ENCODE measurements at regions of chr1 and their contacts with region 1.

Region 1: GRCh38 chr1:99818063-99818699 is 32.0 kb upstream of the AGL start:
- DNase-seq: no peak
- H3K4me3 ChIP-seq: no peak overlapping the region
- H3K27ac ChIP-seq: no peak overlapping the region
- H3K4me1 ChIP-seq: no peaks in the 10 kb centered on the region
- H3K27me3 ChIP-seq: no peaks in the 10 kb centered on the region
- CTCF ChIP-seq: no peak
- POLR2A ChIP-seq: no peak

Region 2: DNA sequence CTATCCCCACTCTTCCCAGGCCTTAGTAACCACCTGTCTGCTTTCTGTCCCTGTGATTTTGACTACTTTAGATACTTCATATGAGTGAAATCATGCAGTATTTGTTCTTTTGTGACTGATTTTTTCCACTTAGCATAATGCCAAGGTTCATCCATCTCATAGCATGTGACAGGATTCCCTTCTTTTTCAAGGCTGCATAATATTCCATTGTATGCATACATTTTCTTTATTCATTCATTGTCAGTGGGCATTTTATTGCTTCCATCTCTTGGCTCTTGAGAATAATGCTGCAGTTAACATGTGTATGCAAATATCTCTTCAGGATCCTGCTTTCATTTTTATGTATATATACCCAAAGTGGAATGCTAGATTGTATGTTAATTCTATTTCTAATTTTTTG is 88.4 kb after region 1 on chr1:
- intact Hi-C with region 1: no loop called
- DNase-seq: no peak
- H3K4me3 ChIP-seq: no peak overlapping the region
- H3K27ac ChIP-seq: no peak overlapping the region
- H3K4me1 ChIP-seq: no peaks in the 10 kb centered on the region
- H3K27me3 ChIP-seq: no peaks in the 10 kb centered on the region
- CTCF ChIP-seq: no peak
- POLR2A ChIP-seq: no peak

Region 3: DNA sequence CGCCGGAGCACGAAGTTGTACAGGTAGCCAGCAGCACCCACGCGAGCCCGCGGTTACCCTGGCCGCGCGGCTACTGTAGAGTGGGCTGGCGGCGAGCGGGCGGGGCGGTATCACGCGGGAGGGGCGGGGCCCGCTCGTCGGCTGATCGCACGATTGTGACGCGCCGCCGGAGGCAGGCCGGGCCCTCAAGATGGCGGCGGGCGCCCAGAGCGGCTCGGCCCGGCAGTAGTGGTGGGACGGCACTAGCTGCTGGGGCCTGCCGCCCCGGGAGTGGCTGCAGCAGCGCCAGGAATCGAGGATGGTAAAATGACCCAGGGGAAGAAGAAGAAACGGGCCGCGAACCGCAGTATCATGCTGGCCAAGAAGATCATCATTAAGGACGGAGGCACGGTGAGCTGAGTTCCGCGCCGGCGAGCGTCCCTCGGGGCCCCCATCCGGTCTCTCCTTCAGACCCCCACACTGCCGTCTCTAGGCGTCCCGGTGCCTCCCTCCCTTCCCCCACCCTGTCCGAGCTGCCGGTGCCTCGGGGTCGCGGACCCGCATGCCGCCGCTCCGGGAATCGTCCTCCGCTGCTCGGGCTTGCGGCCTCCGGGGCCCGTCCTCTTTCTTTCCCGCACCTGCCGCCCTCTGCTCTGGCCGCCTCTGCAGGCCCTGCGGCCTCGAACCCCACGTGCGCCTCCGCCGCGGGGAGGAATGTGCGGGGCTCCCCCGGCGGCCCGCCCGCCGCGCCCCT is 219.9 kb after region 1 on chr1:
- intact Hi-C with region 1: loop called (anchors 10 kb)
- DNase-seq: peak; percentile 92 to 93
- H3K4me3 ChIP-seq: peak overlapping the region; percentile 68 to 92 (median 68)
- H3K27ac ChIP-seq: peak overlapping the region; percentile 92 to 98 (median 95)
- H3K4me1 ChIP-seq: peaks cover 16 to 21% of the 10 kb centered on the region in 2 donors
- H3K27me3 ChIP-seq: no peaks in the 10 kb centered on the region
- CTCF ChIP-seq: no peak
- POLR2A ChIP-seq: peak; percentile 85 to 98

Measured in thyroid gland (tissue), 4 donors.